Head of caudate nucleus (tissue), 42 donors: ENCODE measurements at regions of chr17 and their contacts with region 1.

Region 1: GRCh38 chr17:72539981-72540897 is 419.4 kb downstream of the SOX9 start:
- DNase-seq: peak; percentile 49 to 92 (median 82)

Region 2: GRCh38 chr17:70636517-70637133 is 1903.6 kb before region 1 on chr17:
- intact Hi-C with region 1: loop called (anchors 5 kb)
- DNase-seq: peak in 15 of 42 donors; percentile 16 to 81 (median 50)

Region 3: DNA sequence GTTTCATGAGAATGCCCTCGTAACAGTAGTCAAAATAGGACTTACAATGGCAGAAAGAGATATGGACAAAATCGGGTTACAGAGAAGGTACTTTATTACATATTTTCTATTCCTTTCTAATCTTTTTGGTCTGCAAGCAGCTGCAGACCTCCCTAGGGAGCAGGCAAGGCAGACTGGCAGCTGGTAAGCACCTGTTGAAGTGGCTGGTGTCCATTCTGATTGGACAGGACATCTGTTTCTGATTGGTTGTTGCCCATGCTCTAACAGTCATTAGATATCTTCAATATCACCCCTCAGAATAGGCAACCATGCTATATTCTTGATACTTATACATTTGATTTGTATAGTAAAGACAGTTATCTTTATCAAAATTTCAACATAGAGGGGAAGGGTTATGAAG is 1764.6 kb before region 1 on chr17:
- intact Hi-C with region 1: loop called (anchors 10 kb)
- DNase-seq: no peak

Region 4: GRCh38 chr17:71472809-71473789 is 1067.1 kb before region 1 on chr17:
- intact Hi-C with region 1: loop called (anchors 10 kb)
- DNase-seq: peak in 19 of 42 donors; percentile 4 to 62 (median 27)

Region 5: GRCh38 chr17:72479113-72479512 is 61.1 kb before region 1 on chr17:
- intact Hi-C with region 1: no loop called
- DNase-seq: no peak